ENCODE measurements at regions of chr6 and their contacts with region 1.

Region 1: GRCh38 chr6:144519426-144519825 is 234.3 kb downstream of the UTRN start:
- DNase-seq: no peak
- H3K4me3 ChIP-seq: no peak overlapping the region
- H3K27ac ChIP-seq: no peak overlapping the region
- H3K4me1 ChIP-seq: no peaks in the 10 kb centered on the region
- H3K27me3 ChIP-seq: no peaks in the 10 kb centered on the region
- CTCF ChIP-seq: no peak

Region 2: GRCh38 chr6:144063744-144064401 is 455.6 kb before region 1 on chr6:
- CTCF ChIA-PET with region 1: no interaction called
- POLR2A ChIA-PET with region 1: interaction called, 18 read pairs
- intact Hi-C with region 1: no loop called
- DNase-seq: peak; percentile 50 to 81
- H3K4me3 ChIP-seq: peak overlapping the region; percentile 68
- H3K27ac ChIP-seq: no peak overlapping the region
- H3K4me1 ChIP-seq: 0 out of 2 replicates have a peak, but pooled peaks cover 4% of the 10 kb centered on the region
- H3K27me3 ChIP-seq: peaks cover 11% of the 10 kb centered on the region; the same call in 1 of the 2 replicates
- CTCF ChIP-seq: peak; percentile 36; the same call in 1 of the 2 replicates

Measured in PC-9 (cell line).